Body of pancreas (tissue), 4 donors: ENCODE measurements at regions of chr20 and their contacts with region 1.

Region 1: GRCh38 chr20:44309763-44310663 is 989 bp downstream of the FITM2 start:
- DNase-seq: peak in 3 of 4 donors; percentile 24 to 39 (median 28)
- ATAC-seq: no peak
- H3K4me3 ChIP-seq: peak overlapping the region; percentile 35 to 96
- H3K27ac ChIP-seq: peak overlapping the region in 3 of 4 donors; percentile 60 to 88 (median 78)
- H3K4me1 ChIP-seq: peaks cover 36% of the 10 kb centered on the region
- H3K27me3 ChIP-seq: no peaks in the 10 kb centered on the region
- CTCF ChIP-seq: no peak
- POLR2A ChIP-seq: peak in 1 of 3 donors; percentile 14

Region 2: DNA sequence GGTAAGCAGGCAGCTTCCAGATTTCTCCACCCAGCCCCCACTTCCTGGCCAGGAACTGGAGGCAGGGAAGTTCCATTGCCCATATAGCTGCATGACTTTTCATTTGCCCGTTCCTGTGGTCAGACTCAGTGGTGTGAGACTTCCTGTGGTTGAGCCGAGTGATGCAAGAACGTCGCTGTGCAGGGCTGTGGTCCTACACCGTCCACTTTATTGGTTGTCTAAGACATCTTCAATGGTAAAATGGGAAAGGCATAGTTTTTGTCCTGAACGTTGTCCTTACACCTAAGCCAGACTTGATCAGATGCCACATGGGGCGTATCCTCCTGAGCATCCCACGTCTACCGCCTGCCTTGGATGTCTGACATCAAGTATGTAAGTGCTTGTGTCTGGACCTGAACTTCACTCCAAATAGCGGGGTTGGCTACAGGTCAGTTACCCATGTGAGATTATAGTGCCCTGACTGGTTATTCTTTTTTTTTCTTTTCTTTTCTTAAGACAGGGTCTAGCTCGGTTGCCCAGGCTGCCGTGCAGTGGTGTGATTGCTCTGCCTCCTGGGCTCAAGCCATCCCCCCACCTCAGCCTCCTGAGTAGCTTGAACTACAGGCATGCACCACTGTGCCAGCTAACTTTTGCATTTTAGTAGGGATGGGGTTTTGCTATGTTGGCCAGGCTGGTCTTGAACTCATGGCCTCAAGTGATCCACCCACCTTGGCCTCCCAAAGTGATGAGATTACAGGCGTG is 557.3 kb before region 1 on chr20:
- intact Hi-C with region 1: no loop called
- DNase-seq: peak in 2 of 4 donors; percentile 11 to 56
- ATAC-seq: no peak
- H3K4me3 ChIP-seq: no peak overlapping the region
- H3K27ac ChIP-seq: no peak overlapping the region
- H3K4me1 ChIP-seq: peaks cover 4% of the 10 kb centered on the region
- H3K27me3 ChIP-seq: no peaks in the 10 kb centered on the region
- CTCF ChIP-seq: no peak
- POLR2A ChIP-seq: no peak

Region 3: GRCh38 chr20:44038681-44039123 is 271.3 kb before region 1 on chr20:
- intact Hi-C with region 1: no loop called
- DNase-seq: peak in 1 of 4 donors; percentile 29
- ATAC-seq: no peak
- H3K4me3 ChIP-seq: no peak overlapping the region
- H3K27ac ChIP-seq: no peak overlapping the region
- H3K4me1 ChIP-seq: no peaks in the 10 kb centered on the region
- H3K27me3 ChIP-seq: no peaks in the 10 kb centered on the region
- CTCF ChIP-seq: no peak
- POLR2A ChIP-seq: no peak

Region 4: DNA sequence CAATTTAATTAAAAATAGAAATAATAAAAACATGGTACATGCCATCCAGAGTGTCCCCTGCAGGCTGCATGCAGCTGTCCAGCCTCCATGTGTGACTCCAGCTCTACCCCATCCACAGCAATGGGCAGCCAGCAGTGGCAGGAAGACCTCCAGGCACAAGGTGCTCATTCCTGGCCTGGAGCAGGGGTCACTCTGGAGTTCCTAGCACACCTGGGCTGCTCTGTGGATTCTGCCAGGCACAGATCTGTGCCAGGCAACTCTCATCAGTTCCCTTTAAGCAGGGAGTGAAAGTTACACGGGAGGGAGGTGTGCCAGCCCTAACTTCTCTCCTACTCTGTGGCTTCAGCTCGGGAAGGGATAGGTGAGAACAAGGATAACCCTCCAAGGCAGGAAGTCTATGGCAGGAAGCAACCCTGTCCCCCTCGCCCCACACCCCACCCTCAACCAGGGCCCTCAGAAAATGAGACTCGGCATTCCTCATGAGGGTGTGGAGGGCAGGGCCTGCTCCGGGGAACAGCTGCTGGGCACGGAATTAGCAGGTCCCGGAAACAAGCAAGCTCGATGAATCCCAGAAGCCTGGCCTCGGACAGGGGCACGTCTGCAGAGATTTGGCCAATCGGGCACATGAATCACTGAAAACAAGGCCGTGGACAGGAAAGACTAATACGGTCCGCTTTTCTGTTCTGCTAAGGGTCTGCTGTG is 133.0 kb before region 1 on chr20:
- intact Hi-C with region 1: no loop called
- DNase-seq: no peak
- ATAC-seq: no peak
- H3K4me3 ChIP-seq: no peak overlapping the region
- H3K27ac ChIP-seq: no peak overlapping the region
- H3K4me1 ChIP-seq: no peaks in the 10 kb centered on the region
- H3K27me3 ChIP-seq: peaks cover 0 to 4% of the 10 kb centered on the region in 2 donors
- CTCF ChIP-seq: no peak
- POLR2A ChIP-seq: no peak

Region 5: DNA sequence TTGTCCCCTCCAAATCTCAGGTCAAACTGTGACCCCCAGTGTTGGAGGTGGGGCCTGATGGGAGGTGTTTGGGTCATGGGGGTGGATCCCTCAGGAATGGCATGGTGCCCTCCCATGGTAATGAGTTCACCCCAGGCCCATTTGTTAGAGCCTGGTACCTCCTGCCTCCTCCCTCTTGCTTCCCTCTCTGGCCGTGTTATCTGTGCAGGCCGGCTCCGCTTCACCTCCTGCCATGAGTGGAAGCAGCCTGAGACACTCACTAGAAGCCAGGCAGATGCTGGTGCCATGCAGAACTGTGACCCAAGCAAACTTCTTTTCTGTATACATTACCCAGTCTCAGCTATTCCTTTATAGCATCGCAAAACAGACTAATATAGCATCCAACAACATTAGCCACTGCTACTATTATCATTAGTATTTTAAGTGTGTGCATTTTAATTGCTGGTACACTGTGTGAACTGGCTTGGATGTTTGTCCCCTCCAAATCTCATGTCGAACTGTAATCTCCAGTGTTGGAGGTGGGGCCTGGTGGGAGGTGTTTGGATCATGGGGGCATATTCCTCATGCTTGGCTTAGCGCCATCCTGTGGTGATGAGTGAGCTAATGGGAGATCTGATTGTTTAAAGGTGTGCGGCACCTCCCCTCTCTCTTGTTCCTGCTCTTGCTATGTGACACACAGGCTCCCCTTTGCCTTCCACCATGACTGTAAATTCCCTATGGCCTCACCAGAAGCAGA is 87.2 kb before region 1 on chr20:
- intact Hi-C with region 1: loop called (anchors 5 kb)
- DNase-seq: no peak
- ATAC-seq: no peak
- H3K4me3 ChIP-seq: no peak overlapping the region
- H3K27ac ChIP-seq: no peak overlapping the region
- H3K4me1 ChIP-seq: peaks cover 15% of the 10 kb centered on the region
- H3K27me3 ChIP-seq: no peaks in the 10 kb centered on the region
- CTCF ChIP-seq: no peak
- POLR2A ChIP-seq: no peak

Region 6: DNA sequence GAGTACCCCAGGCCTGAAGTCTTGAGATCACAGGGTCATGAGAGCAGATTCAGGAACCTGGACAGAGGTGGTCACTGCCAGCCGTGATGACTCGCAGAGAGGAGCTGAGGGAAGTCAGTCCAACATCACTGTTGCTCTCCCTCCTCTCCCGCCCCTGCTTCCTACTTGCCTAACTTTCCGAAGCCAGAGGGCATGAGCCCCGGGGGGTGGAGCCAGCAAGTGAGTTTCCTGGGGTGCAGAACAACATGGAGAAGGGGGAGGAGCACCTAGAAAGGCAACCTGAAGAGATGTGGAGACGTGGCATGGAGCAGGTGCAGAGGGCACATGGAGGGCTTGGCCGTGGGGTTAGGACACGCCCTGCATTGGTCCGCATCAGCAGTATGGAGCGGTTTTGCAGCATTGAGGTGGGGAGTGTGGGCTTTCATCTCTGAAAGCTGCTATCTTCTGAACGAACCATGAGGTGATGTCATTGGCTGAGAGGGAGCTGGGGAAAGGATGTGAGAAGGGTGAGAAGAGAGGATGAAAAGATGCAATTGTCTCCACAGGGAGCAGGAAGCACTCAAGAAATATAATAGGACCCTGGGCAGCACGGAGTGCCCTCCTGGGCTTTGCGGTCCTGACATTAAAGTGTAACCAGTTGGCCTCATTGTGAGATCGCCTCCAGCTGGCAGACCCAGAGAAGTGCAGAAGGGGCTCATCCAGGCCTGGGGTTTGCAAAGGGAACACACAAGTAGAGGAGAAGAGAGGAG is 37.9 kb before region 1 on chr20:
- intact Hi-C with region 1: no loop called
- DNase-seq: no peak
- ATAC-seq: no peak
- H3K4me3 ChIP-seq: no peak overlapping the region
- H3K27ac ChIP-seq: no peak overlapping the region
- H3K4me1 ChIP-seq: no peaks in the 10 kb centered on the region
- H3K27me3 ChIP-seq: no peaks in the 10 kb centered on the region
- CTCF ChIP-seq: no peak
- POLR2A ChIP-seq: no peak